GM12878 (cell line): ENCODE measurements at regions of chr4 and their contacts with region 1.

Region 1: GRCh38 chr4:3041192-3042142 is 32.9 kb downstream of the HTT-AS start:
- DNase-seq: no peak
- ATAC-seq: peak; percentile 66
- H3K4me3 ChIP-seq: peak overlapping the region; percentile 85
- H3K27ac ChIP-seq: peak overlapping the region; percentile 95
- H3K4me1 ChIP-seq: peaks cover 66% of the 10 kb centered on the region
- H3K27me3 ChIP-seq: no peaks in the 10 kb centered on the region
- CTCF ChIP-seq: no peak
- EP300 ChIP-seq: no peak
- POLR2A ChIP-seq: peak; percentile 75; the same call in 1 of the 2 replicates
- RAD21 ChIP-seq: no peak

Region 2: DNA sequence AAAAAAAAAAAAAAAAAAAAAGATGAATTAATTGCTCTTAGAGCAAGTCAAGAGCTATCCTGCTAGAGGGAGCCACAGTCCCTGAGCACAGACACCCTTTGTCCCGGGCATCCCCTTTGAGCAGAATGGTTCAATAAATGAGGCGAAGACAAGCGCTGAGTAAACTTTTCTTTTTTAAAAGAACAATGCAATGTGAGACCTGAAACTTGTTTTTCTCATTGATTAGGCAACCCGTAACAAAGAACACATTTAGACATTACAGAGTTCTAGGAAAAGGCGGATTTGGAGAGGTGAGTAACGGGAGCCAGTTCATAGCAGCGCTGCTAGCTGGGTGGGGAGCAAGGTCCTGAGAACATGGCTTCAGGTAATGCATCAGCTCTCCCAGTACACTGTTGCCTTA is 32.0 kb before region 1 on chr4:
- CTCF ChIA-PET with region 1: interaction called, 32 read pairs
- POLR2A ChIA-PET with region 1: interaction called, 5 read pairs
- RAD21 ChIA-PET with region 1: interaction called, 22 read pairs
- SMC1A ChIA-PET with region 1: interaction called, 10 read pairs
- in situ Hi-C with region 1: no loop called
- intact Hi-C with region 1: loop called (anchors 1 kb)
- DNase-seq: no peak
- ATAC-seq: peak; percentile 82
- H3K4me3 ChIP-seq: no peak overlapping the region
- H3K27ac ChIP-seq: no peak overlapping the region
- H3K4me1 ChIP-seq: peaks cover 20% of the 10 kb centered on the region
- H3K27me3 ChIP-seq: no peaks in the 10 kb centered on the region; a peak in 1 of 4 replicates
- CTCF ChIP-seq: peak; percentile 48 to 65 (median 54); a peak in 5 of 6 replicates
- EP300 ChIP-seq: no peak
- POLR2A ChIP-seq: no peak
- RAD21 ChIP-seq: peak; percentile 89

Region 3: GRCh38 chr4:3074078-3074795 is 32.8 kb after region 1 on chr4 and contains the starts of genes HTT and HTT-AS:
- CTCF ChIA-PET with region 1: interaction called, 4 read pairs
- POLR2A ChIA-PET with region 1: interaction called, 14 read pairs
- RAD21 ChIA-PET with region 1: interaction called, 5 read pairs
- SMC1A ChIA-PET with region 1: interaction called, 12 read pairs
- in situ Hi-C with region 1: no loop called
- intact Hi-C with region 1: no loop called
- DNase-seq: peak; percentile 68
- ATAC-seq: peak; percentile 76
- H3K4me3 ChIP-seq: peak within 1 kb of the TSS; percentile 100
- H3K27ac ChIP-seq: peak within 1 kb of the TSS; percentile 94
- H3K4me1 ChIP-seq: peaks cover 7% of the 10 kb centered on the region
- H3K27me3 ChIP-seq: no peaks in the 10 kb centered on the region
- CTCF ChIP-seq: no peak
- EP300 ChIP-seq: no peak
- POLR2A ChIP-seq: peak; percentile 86
- RAD21 ChIP-seq: no peak
- polyA plus RNA-seq, gene HTT: 3.3 to 3.6 TPM
- polyA plus RNA-seq, gene HTT-AS: not detected

Region 4: GRCh38 chr4:3168029-3168428 is 126.6 kb after region 1 on chr4:
- CTCF ChIA-PET with region 1: no interaction called
- POLR2A ChIA-PET with region 1: no interaction called
- RAD21 ChIA-PET with region 1: no interaction called
- SMC1A ChIA-PET with region 1: no interaction called
- in situ Hi-C with region 1: no loop called
- intact Hi-C with region 1: no loop called
- DNase-seq: peak; percentile 8
- ATAC-seq: peak; percentile 74
- H3K4me3 ChIP-seq: no peak overlapping the region
- H3K27ac ChIP-seq: no peak overlapping the region
- H3K4me1 ChIP-seq: no peaks in the 10 kb centered on the region
- H3K27me3 ChIP-seq: no peaks in the 10 kb centered on the region
- CTCF ChIP-seq: no peak
- EP300 ChIP-seq: no peak
- POLR2A ChIP-seq: no peak
- RAD21 ChIP-seq: no peak